ENCODE measurements at regions of chr15 and their contacts with region 1.

Region 1: GRCh38 chr15:26260517-26261133 is 397.5 kb upstream of the ATP10A start:
- DNase-seq: no peak

Region 2: DNA sequence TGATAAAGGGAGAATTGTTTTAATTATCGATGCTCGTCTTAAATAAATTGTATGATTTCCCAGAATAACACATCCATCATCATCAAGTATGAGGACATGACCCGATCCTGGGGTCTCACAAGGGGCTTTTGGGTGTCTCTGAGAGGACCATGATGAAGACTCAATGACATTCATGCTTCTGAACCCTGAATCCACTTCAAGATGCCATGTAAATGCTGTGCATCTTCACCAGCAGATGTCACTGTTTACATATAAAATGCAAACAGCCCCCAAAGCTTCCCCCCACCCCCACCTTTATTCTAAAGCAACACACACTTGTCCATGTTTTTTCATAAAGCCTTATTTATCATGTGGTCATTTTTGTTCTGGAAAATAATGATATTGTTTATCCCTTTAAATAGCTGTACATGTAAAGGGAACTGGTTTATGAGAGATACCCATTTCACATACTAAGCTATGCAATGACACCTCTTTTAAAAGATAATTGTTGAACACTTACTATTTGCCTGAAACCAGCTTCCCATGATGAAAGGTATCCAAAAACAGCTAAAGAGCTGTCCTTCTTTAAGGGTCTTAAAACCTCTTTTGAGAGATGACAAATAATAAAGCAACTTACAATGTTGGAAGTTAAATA is 752.1 kb before region 1 on chr15:
- intact Hi-C with region 1: loop called (anchors 10 kb)
- DNase-seq: no peak

Region 3: DNA sequence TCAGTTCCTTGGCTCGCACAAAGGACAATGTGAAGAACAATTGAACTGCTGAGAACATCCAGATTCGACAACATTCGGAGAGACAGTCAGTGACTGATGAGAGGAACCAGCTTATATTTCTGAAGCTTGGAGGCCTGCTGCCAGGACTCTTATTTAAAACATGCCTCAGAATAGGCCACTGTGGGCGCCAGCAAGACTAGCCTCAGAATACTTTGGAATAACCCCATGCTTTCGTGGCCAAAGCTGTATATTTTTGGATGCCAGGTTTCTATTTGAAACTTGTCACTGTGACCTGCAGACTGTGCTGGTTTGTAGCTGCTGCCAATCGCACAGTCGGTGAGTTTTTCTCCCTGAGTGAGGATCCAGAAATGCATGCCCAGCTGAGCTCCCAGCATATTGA is 691.9 kb before region 1 on chr15:
- intact Hi-C with region 1: loop called (anchors 10 kb)
- DNase-seq: no peak

Region 4: GRCh38 chr15:26197719-26198118 is 62.9 kb before region 1 on chr15:
- intact Hi-C with region 1: loop called (anchors 10 kb)
- DNase-seq: no peak

Region 5: GRCh38 chr15:26294059-26294689 is 33.5 kb after region 1 on chr15:
- intact Hi-C with region 1: no loop called
- DNase-seq: no peak

Region 6: DNA sequence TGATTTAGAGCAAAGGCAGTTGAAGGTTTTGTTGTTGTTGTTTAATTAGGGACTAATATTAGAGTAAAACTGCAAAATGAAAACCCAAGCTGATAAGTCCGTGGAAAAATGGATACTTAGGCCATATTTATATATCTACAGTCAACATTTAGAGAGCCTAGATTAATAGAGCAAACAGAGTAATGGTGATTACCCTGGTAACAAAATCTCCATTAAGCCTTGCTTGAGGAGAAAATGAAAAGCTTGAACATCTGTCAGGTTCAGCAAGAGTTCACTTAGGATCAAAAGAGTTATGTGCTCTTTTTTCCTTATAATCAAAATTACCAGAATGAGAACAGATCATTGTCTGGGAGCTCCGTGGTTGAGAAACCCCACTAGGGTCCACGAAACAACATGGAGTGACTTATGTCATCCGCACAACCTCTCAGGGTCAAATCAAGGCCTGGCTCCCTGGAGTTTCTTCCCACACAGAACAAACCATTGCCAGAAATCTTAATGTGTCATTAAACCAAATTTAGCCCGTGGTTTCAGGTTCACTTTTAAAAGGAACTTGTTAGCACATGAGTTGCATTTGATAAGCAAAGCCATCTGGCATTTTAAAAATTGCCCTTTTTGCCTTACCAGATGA is 131.1 kb after region 1 on chr15:
- intact Hi-C with region 1: loop called (anchors 10 kb)
- DNase-seq: no peak

Region 7: GRCh38 chr15:27135151-27135550 is 874.5 kb after region 1 on chr15:
- intact Hi-C with region 1: no loop called
- DNase-seq: no peak

Measured in cardiac septum (tissue), 1 donor.